CD8-positive, alpha-beta memory T cell (primary cell): ENCODE measurements at regions of chr11 and their contacts with region 1.

Region 1: GRCh38 chr11:134244655-134245054 is 8.5 kb downstream of the THYN1 start:
- DNase-seq: peak in 2 of 5 donors; percentile 22 to 29
- H3K4me3 ChIP-seq: no peak overlapping the region
- H3K4me3 Mint-ChIP-seq: no peak overlapping the region
- H3K27ac ChIP-seq: no peak overlapping the region
- H3K27ac Mint-ChIP-seq: peak overlapping the region in 3 of 8 donors; percentile 51 to 73 (median 66)
- H3K4me1 ChIP-seq: no peaks in the 10 kb centered on the region
- H3K4me1 Mint-ChIP-seq: peaks cover 0 to 4% (median 0%) of the 10 kb centered on the region in 3 donors
- H3K27me3 ChIP-seq: no peaks in the 10 kb centered on the region
- H3K27me3 Mint-ChIP-seq: no peaks in the 10 kb centered on the region

Region 2: GRCh38 chr11:134207538-134208239 is 37.0 kb before region 1 on chr11:
- CTCF ChIA-PET with region 1: interaction called, 19 read pairs
- POLR2A ChIA-PET with region 1: no interaction called
- DNase-seq: peak; percentile 46 to 76 (median 51)
- H3K4me3 ChIP-seq: no peak overlapping the region
- H3K4me3 Mint-ChIP-seq: no peak overlapping the region
- H3K27ac ChIP-seq: no peak overlapping the region
- H3K27ac Mint-ChIP-seq: peak overlapping the region in 2 of 8 donors; percentile 36 to 43
- H3K4me1 ChIP-seq: no peaks in the 10 kb centered on the region
- H3K4me1 Mint-ChIP-seq: peaks cover 0 to 7% (median 5%) of the 10 kb centered on the region in 3 donors
- H3K27me3 ChIP-seq: no peaks in the 10 kb centered on the region
- H3K27me3 Mint-ChIP-seq: no peaks in the 10 kb centered on the region

Region 3: GRCh38 chr11:134289789-134290188 is 45.1 kb after region 1 on chr11:
- CTCF ChIA-PET with region 1: no interaction called
- POLR2A ChIA-PET with region 1: no interaction called
- DNase-seq: no peak
- H3K4me3 ChIP-seq: no peak overlapping the region
- H3K4me3 Mint-ChIP-seq: no peak overlapping the region
- H3K27ac ChIP-seq: no peak overlapping the region
- H3K27ac Mint-ChIP-seq: peak overlapping the region in 1 of 8 donors; percentile 78
- H3K4me1 ChIP-seq: no peaks in the 10 kb centered on the region
- H3K4me1 Mint-ChIP-seq: no peaks in the 10 kb centered on the region
- H3K27me3 ChIP-seq: no peaks in the 10 kb centered on the region
- H3K27me3 Mint-ChIP-seq: peaks cover 4 to 12% of the 10 kb centered on the region in 2 donors